OCI-LY7 (cell line): ENCODE measurements at regions of chr13 and their contacts with region 1.

Region 1: DNA sequence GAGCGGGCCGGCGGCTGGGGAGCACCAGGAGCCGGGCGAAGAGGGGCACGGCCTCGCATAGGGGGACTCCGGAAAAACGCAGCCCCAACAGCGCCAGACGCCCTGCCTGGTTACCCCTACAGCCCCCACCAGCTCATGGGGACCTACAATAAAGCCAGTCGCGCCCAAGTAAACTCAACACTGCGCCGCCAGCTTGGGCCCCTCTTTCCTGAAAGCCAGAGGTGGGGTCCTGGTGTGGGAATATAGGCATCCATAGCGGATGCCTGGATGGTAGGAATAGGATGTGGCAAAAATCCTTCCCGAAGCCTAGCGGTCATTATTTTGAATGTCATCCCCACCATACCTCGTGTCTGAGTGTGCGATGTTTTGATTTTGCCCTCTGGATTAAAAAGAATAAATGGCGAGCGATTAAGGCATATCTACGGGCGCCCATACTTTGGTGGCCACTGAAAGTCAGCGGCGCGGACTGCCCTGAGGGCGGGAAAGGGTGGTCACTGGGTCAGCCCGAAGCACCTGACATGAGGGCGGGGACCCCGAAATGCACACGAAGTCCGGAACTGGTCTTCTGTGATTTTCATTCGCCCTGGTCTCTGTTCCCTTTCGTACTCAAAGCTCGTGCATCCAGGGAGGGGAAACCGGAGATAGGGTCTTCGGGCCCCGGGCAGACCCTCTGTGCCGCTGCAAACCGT is at the starts of genes NHLRC3 and PROSER1:
- DNase-seq: peak; percentile 97
- H3K4me3 ChIP-seq: peak within 1 kb of the TSS; percentile 93
- H3K27ac ChIP-seq: peak within 1 kb of the TSS; percentile 80
- H3K4me1 ChIP-seq: peaks cover 36% of the 10 kb centered on the region
- CTCF ChIP-seq: no peak
- total RNA-seq, gene NHLRC3: 26.8 and 28.6 TPM in 2 replicates
- total RNA-seq, gene PROSER1: 35.3 and 43.3 TPM in 2 replicates

Region 2: DNA sequence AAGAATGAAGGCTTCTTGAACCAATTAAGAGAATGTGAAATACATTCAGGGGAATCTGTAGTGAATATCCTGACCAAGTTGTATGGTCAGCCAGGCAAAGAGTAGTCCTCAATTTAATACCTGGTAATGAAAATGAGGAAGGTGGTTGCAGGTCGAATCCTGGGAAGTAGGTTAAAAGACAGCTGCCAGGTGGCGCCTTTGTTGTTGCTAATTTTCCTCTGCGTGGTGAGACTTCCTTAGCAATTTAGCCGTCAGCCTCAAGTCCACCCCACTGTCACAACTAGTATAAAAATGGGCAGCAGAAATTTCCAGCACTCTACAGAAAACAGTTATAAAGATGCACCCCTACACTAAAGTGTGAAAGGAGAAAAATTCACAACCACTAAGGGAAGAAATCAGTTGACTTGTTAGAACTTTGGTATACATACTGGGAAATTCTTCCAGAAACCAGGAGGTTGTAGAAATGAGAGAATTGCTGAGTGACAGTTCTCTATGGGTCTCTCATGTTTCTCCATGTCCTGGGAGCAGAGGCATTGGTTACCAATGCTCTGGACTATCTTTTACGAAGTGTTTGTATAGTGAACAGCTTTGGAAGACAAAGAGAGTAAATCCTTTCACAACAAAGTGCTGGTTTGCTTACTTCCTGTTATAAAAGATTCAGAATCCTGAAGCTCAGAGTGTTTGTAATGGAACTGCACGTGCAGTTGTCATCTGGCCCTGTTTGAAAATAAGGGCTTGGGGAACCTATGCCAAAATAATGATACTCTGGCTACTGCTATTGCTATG is 236.1 kb after region 1 on chr13:
- CTCF ChIA-PET with region 1: no interaction called
- POLR2A ChIA-PET with region 1: no interaction called
- intact Hi-C with region 1: no loop called
- DNase-seq: peak; percentile 47
- H3K4me3 ChIP-seq: no peak overlapping the region
- H3K27ac ChIP-seq: no peak overlapping the region
- H3K4me1 ChIP-seq: peaks cover 6% of the 10 kb centered on the region
- CTCF ChIP-seq: peak; percentile 69

Region 3: GRCh38 chr13:40706439-40706838 is 1668.4 kb after region 1 on chr13:
- CTCF ChIA-PET with region 1: no interaction called
- POLR2A ChIA-PET with region 1: no interaction called
- intact Hi-C with region 1: loop called (anchors 10 kb)
- DNase-seq: peak; percentile 60
- H3K4me3 ChIP-seq: no peak overlapping the region
- H3K27ac ChIP-seq: peak overlapping the region; percentile 54
- H3K4me1 ChIP-seq: peaks cover 20% of the 10 kb centered on the region
- CTCF ChIP-seq: no peak